AG04450 (cell line): ENCODE measurements at regions of chr3 and their contacts with region 1.

Region 1: GRCh38 chr3:79086514-79086913 is 681.3 kb downstream of the ROBO1 start:
- DNase-seq: peak; percentile 34
- H3K4me3 ChIP-seq: no peak overlapping the region
- H3K27ac ChIP-seq: no peak overlapping the region
- H3K27me3 ChIP-seq: no peaks in the 10 kb centered on the region
- CTCF ChIP-seq: peak; percentile 79

Region 2: GRCh38 chr3:78483090-78483489 is 603.4 kb before region 1 on chr3:
- CTCF ChIA-PET with region 1: no interaction called
- POLR2A ChIA-PET with region 1: no interaction called
- DNase-seq: no peak
- H3K4me3 ChIP-seq: no peak overlapping the region
- H3K27ac ChIP-seq: no peak overlapping the region
- H3K27me3 ChIP-seq: no peaks in the 10 kb centered on the region
- CTCF ChIP-seq: no peak

Region 3: DNA sequence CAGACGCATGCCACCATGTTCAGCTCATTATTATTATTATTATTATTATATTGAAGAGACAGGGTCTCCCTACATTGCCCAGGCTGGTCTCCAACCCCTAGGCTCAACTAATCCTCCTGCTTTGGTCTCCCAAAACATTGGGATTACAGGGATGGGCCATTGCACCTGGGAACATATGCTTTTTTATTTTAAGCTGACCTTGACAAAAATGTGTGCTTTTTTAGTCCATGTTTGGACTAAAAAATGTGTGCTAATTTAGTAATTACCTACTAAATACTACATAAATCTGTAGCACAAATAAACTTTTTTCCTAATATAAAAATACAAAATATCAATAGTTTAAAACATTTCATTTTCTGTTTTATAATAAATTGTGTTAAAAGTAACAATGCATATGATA is 12.0 kb before region 1 on chr3:
- CTCF ChIA-PET with region 1: interaction called, 17 read pairs
- POLR2A ChIA-PET with region 1: no interaction called
- DNase-seq: no peak
- H3K4me3 ChIP-seq: no peak overlapping the region
- H3K27ac ChIP-seq: no peak overlapping the region
- H3K27me3 ChIP-seq: no peaks in the 10 kb centered on the region
- CTCF ChIP-seq: no peak

Region 4: GRCh38 chr3:79103305-79103704 is 16.8 kb after region 1 on chr3:
- CTCF ChIA-PET with region 1: interaction called, 40 read pairs
- POLR2A ChIA-PET with region 1: no interaction called
- DNase-seq: no peak
- H3K4me3 ChIP-seq: no peak overlapping the region
- H3K27ac ChIP-seq: no peak overlapping the region
- H3K27me3 ChIP-seq: no peaks in the 10 kb centered on the region
- CTCF ChIP-seq: no peak

Region 5: GRCh38 chr3:79125313-79125984 is 38.9 kb after region 1 on chr3:
- CTCF ChIA-PET with region 1: interaction called, 13 read pairs
- POLR2A ChIA-PET with region 1: no interaction called
- DNase-seq: no peak
- H3K4me3 ChIP-seq: no peak overlapping the region
- H3K27ac ChIP-seq: no peak overlapping the region
- H3K27me3 ChIP-seq: no peaks in the 10 kb centered on the region
- CTCF ChIP-seq: no peak

Region 6: GRCh38 chr3:79354179-79354688 is 267.7 kb after region 1 on chr3:
- CTCF ChIA-PET with region 1: interaction called, 265 read pairs
- POLR2A ChIA-PET with region 1: no interaction called
- DNase-seq: no peak
- H3K4me3 ChIP-seq: no peak overlapping the region
- H3K27ac ChIP-seq: no peak overlapping the region
- H3K27me3 ChIP-seq: no peaks in the 10 kb centered on the region
- CTCF ChIP-seq: no peak

Region 7: GRCh38 chr3:79369306-79369705 is 282.8 kb after region 1 on chr3:
- CTCF ChIA-PET with region 1: interaction called, 45 read pairs
- POLR2A ChIA-PET with region 1: no interaction called
- DNase-seq: no peak
- H3K4me3 ChIP-seq: no peak overlapping the region
- H3K27ac ChIP-seq: no peak overlapping the region
- H3K27me3 ChIP-seq: no peaks in the 10 kb centered on the region
- CTCF ChIP-seq: peak; percentile 55